Activated CD4-positive, alpha-beta memory T cell treated with anti-CD3 and anti-CD28 coated beads, Interleukin-2, amount 10 ng/mL, durations not matched to agents 7 days and 5 days (primary cell): ENCODE measurements at regions of chr6 and their contacts with region 1.

Region 1: GRCh38 chr6:42745707-42746462 is at the start of gene TBCC:
- DNase-seq: peak; percentile 96
- H3K4me3 Mint-ChIP-seq: peak within 1 kb of the TSS; percentile 96
- H3K27ac Mint-ChIP-seq: peak within 1 kb of the TSS; percentile 100
- H3K4me1 Mint-ChIP-seq: peaks cover 34% of the 10 kb centered on the region
- H3K27me3 Mint-ChIP-seq: no peaks in the 10 kb centered on the region
- total RNA-seq, gene TBCC: 33.7 to 34.9 TPM

Region 2: DNA sequence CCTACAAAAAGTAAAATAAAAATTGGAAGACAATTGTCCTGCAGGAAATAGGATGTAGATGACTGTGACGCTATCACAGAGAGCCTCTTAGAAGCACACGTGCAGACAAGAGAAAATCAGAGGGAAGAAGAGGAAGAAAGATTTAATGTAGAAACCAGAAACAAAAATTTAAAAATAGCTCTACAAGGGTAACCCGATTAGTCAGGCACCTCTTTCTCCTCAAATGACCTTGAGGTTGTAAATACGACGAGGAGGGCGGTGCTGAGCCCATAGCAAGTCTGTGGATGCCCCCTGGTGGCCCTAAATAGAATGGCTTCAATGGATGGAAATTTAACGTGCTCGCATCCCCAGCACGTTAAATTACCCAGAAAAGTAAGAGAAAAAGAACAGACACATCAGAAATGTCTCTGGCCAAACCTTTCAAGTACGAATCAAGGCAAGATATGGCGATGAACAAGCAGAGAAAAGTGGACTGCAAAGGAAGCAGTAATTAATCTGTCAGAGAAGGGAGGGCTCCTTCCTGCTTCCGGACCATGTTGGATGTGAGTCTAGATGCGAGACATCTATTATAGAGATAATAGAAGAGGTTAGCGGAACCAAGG is 19.3 kb before region 1 on chr6:
- CTCF ChIA-PET with region 1: interaction called, 20 read pairs
- POLR2A ChIA-PET with region 1: interaction called, 35 read pairs
- DNase-seq: peak; percentile 79
- H3K4me3 Mint-ChIP-seq: peak overlapping the region; percentile 77
- H3K27ac Mint-ChIP-seq: peak overlapping the region; percentile 91
- H3K4me1 Mint-ChIP-seq: peaks cover 22% of the 10 kb centered on the region
- H3K27me3 Mint-ChIP-seq: no peaks in the 10 kb centered on the region

Region 3: GRCh38 chr6:42766141-42766670 is 20.3 kb after region 1 on chr6:
- CTCF ChIA-PET with region 1: interaction called, 15 read pairs
- POLR2A ChIA-PET with region 1: interaction called, 658 read pairs
- DNase-seq: no peak
- H3K4me3 Mint-ChIP-seq: no peak overlapping the region
- H3K27ac Mint-ChIP-seq: no peak overlapping the region
- H3K4me1 Mint-ChIP-seq: peaks cover 26% of the 10 kb centered on the region
- H3K27me3 Mint-ChIP-seq: no peaks in the 10 kb centered on the region

Region 4: DNA sequence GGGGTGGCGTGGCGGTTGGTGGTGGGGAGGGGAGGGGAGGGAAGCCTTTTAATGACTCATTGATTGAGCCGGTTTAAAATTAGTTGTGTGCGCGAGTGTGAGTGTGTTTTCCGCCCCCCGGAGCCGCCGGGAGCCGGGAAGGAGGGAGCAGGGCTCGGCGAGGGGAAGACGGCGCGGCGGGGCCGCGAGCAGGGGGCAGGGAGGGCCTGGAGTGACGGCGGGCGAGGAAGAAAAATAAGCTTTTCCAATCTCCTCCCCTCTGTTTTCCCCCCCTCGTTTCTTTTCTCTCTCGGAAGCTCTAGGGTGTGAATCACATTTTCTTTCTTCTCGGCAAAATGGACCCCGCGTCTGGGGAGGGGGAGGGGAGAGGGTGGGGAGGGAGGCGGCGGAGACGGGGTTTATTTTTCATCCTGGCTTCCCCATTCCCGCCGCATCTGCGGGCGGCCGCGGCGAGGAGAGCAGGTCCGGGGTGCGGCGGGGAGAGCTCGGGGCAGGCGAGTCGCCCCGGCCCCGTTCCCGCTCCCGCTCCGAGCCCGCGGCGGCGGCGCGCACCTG is 36.8 kb after region 1 on chr6:
- CTCF ChIA-PET with region 1: interaction called, 9 read pairs
- POLR2A ChIA-PET with region 1: interaction called, 658 read pairs
- DNase-seq: peak; percentile 64
- H3K4me3 Mint-ChIP-seq: peak overlapping the region; percentile 95
- H3K27ac Mint-ChIP-seq: peak overlapping the region; percentile 100
- H3K4me1 Mint-ChIP-seq: peaks cover 18% of the 10 kb centered on the region
- H3K27me3 Mint-ChIP-seq: no peaks in the 10 kb centered on the region

Region 5: DNA sequence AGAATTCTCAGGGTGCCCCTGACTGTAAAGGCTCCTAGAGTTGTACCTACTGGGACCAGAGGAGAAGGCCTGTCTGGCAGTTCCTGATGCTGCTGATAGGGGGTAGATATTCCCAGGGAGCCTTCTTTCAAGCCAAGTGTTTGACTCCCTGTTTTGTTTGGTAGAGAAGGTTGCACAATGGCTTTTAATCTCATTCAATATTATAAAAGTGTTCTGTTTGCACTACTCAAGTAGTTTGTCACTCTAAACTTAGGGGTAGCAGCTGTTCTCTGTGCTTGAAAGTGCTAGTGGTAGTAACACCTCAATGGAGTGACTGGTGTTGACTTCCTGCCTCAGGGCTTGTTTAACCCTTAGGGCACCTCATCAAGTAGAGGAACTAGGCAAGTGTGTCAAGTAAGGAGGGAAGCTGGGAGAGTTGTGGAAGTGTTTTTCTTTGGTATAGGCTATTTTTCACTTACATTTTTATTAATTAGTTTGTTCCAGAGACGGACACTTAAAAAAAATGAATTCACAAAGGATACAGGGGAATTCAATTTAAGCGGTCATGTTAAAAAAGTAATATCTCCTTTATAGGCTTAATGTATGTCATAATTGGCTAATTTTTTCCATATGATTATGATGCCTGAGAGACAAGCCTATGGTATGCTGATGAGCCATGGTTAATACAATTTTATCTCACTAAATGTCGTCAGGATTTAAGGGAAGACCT is 74.1 kb after region 1 on chr6:
- CTCF ChIA-PET with region 1: interaction called, 3 read pairs
- POLR2A ChIA-PET with region 1: interaction called, 20 read pairs
- DNase-seq: no peak
- H3K4me3 Mint-ChIP-seq: no peak overlapping the region
- H3K27ac Mint-ChIP-seq: no peak overlapping the region
- H3K4me1 Mint-ChIP-seq: peaks cover 5% of the 10 kb centered on the region
- H3K27me3 Mint-ChIP-seq: no peaks in the 10 kb centered on the region

Region 6: GRCh38 chr6:42879372-42880239 is 133.7 kb after region 1 on chr6 and contains the start of gene RPL7L1:
- CTCF ChIA-PET with region 1: interaction called, 10 read pairs
- POLR2A ChIA-PET with region 1: interaction called, 96 read pairs
- DNase-seq: peak; percentile 86
- H3K4me3 Mint-ChIP-seq: peak within 1 kb of the TSS; percentile 94
- H3K27ac Mint-ChIP-seq: peak within 1 kb of the TSS; percentile 92
- H3K4me1 Mint-ChIP-seq: peaks cover 31% of the 10 kb centered on the region
- H3K27me3 Mint-ChIP-seq: no peaks in the 10 kb centered on the region
- total RNA-seq, gene RPL7L1: 71.4 to 74.2 TPM

Region 7: GRCh38 chr6:42928986-42929820 is 183.3 kb after region 1 on chr6 and contains the start of gene CNPY3:
- CTCF ChIA-PET with region 1: interaction called, 3 read pairs
- POLR2A ChIA-PET with region 1: interaction called, 22 read pairs
- DNase-seq: peak; percentile 98
- H3K4me3 Mint-ChIP-seq: peak within 1 kb of the TSS; percentile 100
- H3K27ac Mint-ChIP-seq: peak within 1 kb of the TSS; percentile 94
- H3K4me1 Mint-ChIP-seq: peaks cover 36% of the 10 kb centered on the region
- H3K27me3 Mint-ChIP-seq: no peaks in the 10 kb centered on the region
- total RNA-seq, gene CNPY3: 51.1 to 53.2 TPM